ENCODE measurements at regions of chr3 and their contacts with region 1.

Region 1: DNA sequence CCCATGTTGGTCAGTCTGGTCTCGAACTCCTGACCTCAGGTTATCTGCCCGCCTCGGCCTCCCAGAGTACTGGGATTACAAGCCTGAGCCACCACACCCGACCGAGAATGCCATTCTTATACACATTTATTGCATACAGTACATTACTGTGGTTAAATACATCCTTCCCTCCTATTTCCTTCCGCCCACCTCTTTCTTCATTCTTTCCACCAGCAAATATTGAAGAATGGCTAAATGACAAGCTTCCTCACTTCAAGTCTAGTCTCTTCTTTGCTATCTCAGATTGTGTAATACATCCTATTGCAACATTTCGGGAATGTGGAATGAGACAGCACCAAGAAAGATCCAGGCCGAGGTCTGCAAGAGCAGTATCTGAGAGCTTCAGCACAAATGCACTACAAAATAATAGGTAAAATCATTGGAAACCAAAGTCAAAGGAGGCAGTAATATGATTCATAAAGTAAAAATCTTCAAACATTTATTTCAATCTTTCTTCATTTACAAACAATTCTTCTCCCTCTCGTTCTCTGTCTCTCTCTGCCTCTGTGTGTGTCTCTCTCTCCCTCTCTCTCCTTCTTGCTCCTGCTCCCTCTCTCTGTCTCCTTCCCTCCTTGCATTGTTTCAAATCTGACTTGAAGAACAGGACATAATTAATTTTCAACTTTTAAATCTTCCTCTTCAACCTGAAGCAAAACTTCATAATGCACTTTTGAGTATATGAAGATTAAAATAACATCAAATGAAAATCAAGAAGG is 94.7 kb upstream of the TGFBR2 start:
- DNase-seq: no peak

Region 2: DNA sequence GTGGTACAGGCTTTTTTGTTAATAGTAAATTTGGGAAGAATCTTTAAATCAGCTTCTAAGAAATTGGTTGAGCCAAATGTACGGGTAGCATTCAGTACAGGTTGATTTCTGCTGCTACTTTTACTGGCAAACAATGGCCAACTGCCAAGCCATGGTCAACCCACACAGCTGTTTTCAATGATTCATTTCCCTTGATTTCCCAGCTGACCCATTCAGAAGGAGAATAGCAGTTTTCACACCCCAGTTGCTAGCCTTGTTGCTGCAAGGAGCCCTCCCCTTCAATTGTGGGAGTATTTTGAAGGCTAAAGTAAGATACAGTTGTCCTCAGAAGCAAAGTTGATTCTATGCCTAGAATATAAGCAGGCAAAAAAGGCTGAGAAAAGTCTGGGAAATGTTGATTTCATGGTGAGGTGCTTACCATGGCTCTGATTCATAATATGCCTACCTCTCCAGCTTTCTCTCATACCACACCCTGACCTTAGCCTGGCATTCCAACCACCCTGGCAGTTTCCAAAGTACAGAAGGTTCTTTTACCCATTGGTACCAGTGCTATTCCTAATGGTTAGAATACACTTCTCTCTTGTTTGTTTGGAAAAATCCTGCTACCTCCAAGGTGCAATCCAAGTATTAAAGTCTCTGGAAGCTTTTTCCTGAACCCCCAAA is 225.6 kb before region 1 on chr3:
- intact Hi-C with region 1: loop called (anchors 10 kb)
- DNase-seq: peak; percentile 78

Region 3: GRCh38 chr3:30437171-30437601 is 74.5 kb before region 1 on chr3:
- intact Hi-C with region 1: loop called (anchors 5 kb)
- DNase-seq: no peak